Heart right ventricle (tissue), 16 donors: ENCODE measurements at regions of chr6 and their contacts with region 1.

Region 1: GRCh38 chr6:142592876-142593275 is 291.1 kb downstream of the ADGRG6 start:
- DNase-seq: no peak
- ATAC-seq: no peak
- H3K4me3 ChIP-seq: no peak overlapping the region
- H3K27ac ChIP-seq: no peak overlapping the region
- H3K4me1 ChIP-seq: no peaks in the 10 kb centered on the region
- H3K27me3 ChIP-seq: peaks cover 0 to 9% (median 0%) of the 10 kb centered on the region in 7 donors
- CTCF ChIP-seq: no peak

Region 2: GRCh38 chr6:142395768-142396231 is 197.1 kb before region 1 on chr6:
- intact Hi-C with region 1: no loop called
- DNase-seq: no peak
- ATAC-seq: no peak
- H3K4me3 ChIP-seq: no peak overlapping the region
- H3K27ac ChIP-seq: no peak overlapping the region
- H3K4me1 ChIP-seq: no peaks in the 10 kb centered on the region
- H3K27me3 ChIP-seq: peaks cover 0 to 12% (median 0%) of the 10 kb centered on the region in 7 donors
- CTCF ChIP-seq: no peak

Region 3: GRCh38 chr6:142551274-142551811 is 41.5 kb before region 1 on chr6:
- intact Hi-C with region 1: loop called in 1 of 10 experiments (anchors 2 kb)
- DNase-seq: no peak
- ATAC-seq: no peak
- H3K4me3 ChIP-seq: no peak overlapping the region
- H3K27ac ChIP-seq: no peak overlapping the region
- H3K4me1 ChIP-seq: peaks cover 0 to 7% (median 0%) of the 10 kb centered on the region in 9 donors
- H3K27me3 ChIP-seq: peaks cover 0 to 7% (median 0%) of the 10 kb centered on the region in 7 donors
- CTCF ChIP-seq: no peak

Region 4: GRCh38 chr6:142627474-142627873 is 34.6 kb after region 1 on chr6:
- intact Hi-C with region 1: loop called in 1 of 10 experiments (anchors 1 kb)
- DNase-seq: no peak
- ATAC-seq: no peak
- H3K4me3 ChIP-seq: no peak overlapping the region
- H3K27ac ChIP-seq: no peak overlapping the region
- H3K4me1 ChIP-seq: no peaks in the 10 kb centered on the region
- H3K27me3 ChIP-seq: no peaks in the 10 kb centered on the region
- CTCF ChIP-seq: no peak